Left colon (tissue), 2 donors: ENCODE measurements at regions of chr9 and their contacts with region 1.

Region 1: GRCh38 chr9:37903647-37904444 is at the start of gene SLC25A51:
- DNase-seq: peak; percentile 90 to 96
- ATAC-seq: peak; percentile 85
- total RNA-seq, gene SLC25A51: 19.8 to 23.4 TPM

Region 2: GRCh38 chr9:37994639-37995347 is 90.9 kb after region 1 on chr9:
- intact Hi-C with region 1: no loop called
- DNase-seq: peak; percentile 57 to 72
- ATAC-seq: peak; percentile 55

Region 3: GRCh38 chr9:38160613-38161215 is 256.9 kb after region 1 on chr9:
- intact Hi-C with region 1: loop called in 1 of 2 experiments (anchors 5 kb)
- DNase-seq: peak; percentile 46 to 79
- ATAC-seq: peak; percentile 69

Region 4: DNA sequence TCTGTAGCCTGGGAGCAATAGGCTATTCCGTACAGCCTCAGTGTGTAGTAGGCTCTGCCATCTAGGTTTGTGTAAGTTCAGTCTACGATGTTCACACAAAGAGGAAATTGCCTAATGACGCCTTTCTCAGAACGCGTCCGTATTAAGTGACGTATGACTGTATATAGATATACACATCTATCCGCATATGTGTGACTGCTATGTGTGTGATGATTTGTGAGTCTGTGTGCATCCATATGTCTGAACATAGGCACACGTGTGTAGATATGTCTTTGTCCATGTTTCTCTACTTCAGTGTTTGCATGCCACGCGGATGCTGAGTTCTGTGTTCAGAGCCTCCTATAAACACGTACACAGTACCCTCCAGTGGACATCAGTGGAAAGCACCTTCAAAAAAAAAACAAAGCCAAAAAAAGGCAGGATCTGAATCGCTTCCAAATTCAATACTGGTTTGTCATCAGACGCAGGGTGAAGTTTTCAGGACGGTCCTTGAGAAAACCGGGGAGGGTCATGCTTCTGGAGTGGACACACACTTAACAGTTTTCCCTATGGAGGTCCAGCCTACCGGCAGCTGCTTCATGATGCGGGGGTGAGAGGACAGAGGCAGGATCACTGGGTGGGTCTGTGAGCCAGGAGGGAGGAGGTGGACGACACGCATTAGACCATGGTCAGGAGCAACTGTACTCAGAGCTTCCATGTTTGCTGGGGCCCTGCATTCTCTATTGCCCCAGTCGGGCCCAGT is 459.2 kb after region 1 on chr9:
- intact Hi-C with region 1: loop called in 1 of 2 experiments (anchors 10 kb)
- DNase-seq: peak in 1 of 2 donors; percentile 34
- ATAC-seq: peak; percentile 81